ENCODE measurements at regions of chr20 and their contacts with region 1.

Region 1: GRCh38 chr20:51372176-51372803 is 170.2 kb downstream of the NFATC2 start:
- DNase-seq: peak; percentile 82
- H3K4me3 ChIP-seq: no peak overlapping the region
- H3K27ac ChIP-seq: no peak overlapping the region
- H3K4me1 ChIP-seq: peaks cover 9% of the 10 kb centered on the region
- H3K27me3 ChIP-seq: no peaks in the 10 kb centered on the region
- CTCF ChIP-seq: peak; percentile 50 to 68 (median 51)
- POLR2A ChIP-seq: no peak

Region 2: GRCh38 chr20:51275826-51276225 is 96.5 kb before region 1 on chr20:
- intact Hi-C with region 1: no loop called
- DNase-seq: no peak
- H3K4me3 ChIP-seq: no peak overlapping the region
- H3K27ac ChIP-seq: no peak overlapping the region
- H3K4me1 ChIP-seq: no peaks in the 10 kb centered on the region
- H3K27me3 ChIP-seq: no peaks in the 10 kb centered on the region
- CTCF ChIP-seq: no peak
- POLR2A ChIP-seq: no peak

Region 3: GRCh38 chr20:51298141-51298749 is 74.0 kb before region 1 on chr20:
- intact Hi-C with region 1: no loop called
- DNase-seq: no peak
- H3K4me3 ChIP-seq: no peak overlapping the region
- H3K27ac ChIP-seq: no peak overlapping the region
- H3K4me1 ChIP-seq: no peaks in the 10 kb centered on the region
- H3K27me3 ChIP-seq: no peaks in the 10 kb centered on the region
- CTCF ChIP-seq: no peak
- POLR2A ChIP-seq: no peak

Region 4: DNA sequence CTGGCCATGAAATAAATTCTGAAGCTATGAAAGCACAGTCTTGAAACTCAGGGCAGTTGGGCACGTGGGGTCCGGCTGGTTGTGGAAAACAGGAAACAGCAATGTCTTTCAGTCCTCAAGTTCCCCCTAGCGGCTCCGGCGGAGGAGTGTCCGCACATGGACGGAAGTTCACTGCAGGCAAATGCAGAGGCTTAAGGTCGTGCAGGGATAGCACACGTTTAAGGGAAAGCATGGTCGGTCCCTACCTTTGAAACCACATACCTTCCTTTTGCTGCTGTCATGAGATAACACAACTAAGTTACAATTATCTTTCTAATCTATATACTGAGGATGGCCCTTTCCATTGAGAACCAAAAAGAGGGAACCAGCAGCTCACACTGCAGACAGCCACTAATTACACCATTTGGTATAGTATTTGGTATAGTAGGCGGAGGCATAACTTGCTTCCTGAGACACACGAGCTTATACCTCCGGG is 222.8 kb after region 1 on chr20:
- intact Hi-C with region 1: loop called (anchors 10 kb)
- DNase-seq: peak; percentile 94
- H3K4me3 ChIP-seq: no peak overlapping the region
- H3K27ac ChIP-seq: no peak overlapping the region
- H3K4me1 ChIP-seq: no peaks in the 10 kb centered on the region
- H3K27me3 ChIP-seq: no peaks in the 10 kb centered on the region
- CTCF ChIP-seq: peak; percentile 72 to 93 (median 85)
- POLR2A ChIP-seq: no peak